ENCODE measurements at regions of chr1 and their contacts with region 1.

Region 1: GRCh38 chr1:23809751-23810171 is 9.2 kb upstream of the GALE start:
- DNase-seq: peak; percentile 88
- ATAC-seq: peak; percentile 96
- H3K4me3 Mint-ChIP-seq: no peak overlapping the region
- H3K27ac Mint-ChIP-seq: no peak overlapping the region
- H3K4me1 Mint-ChIP-seq: peaks cover 9% of the 10 kb centered on the region
- H3K27me3 Mint-ChIP-seq: no peaks in the 10 kb centered on the region
- CTCF ChIP-seq: peak; percentile 79

Region 2: DNA sequence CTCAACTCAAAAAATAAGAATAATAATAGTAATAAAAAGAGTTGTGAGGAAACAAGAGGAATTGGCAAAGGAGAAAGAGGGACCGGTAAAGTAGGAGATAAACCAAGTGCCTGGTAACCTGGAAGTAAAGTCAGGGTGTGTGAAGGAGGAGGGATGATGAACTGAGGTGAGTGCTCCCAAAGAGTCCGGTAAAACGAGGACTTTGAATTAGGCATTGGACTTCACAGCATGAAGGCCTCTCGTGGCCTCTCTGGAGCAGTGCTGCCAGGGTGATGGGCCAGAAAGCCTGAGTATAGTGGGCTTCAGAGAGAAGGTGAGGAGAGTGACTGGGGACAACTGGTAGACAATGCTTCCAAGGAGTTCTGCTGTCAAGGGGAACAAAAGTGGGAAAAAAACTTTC is 100.5 kb before region 1 on chr1:
- CTCF ChIA-PET with region 1: no interaction called
- POLR2A ChIA-PET with region 1: no interaction called
- intact Hi-C with region 1: no loop called
- DNase-seq: no peak
- ATAC-seq: no peak
- H3K4me3 Mint-ChIP-seq: no peak overlapping the region
- H3K27ac Mint-ChIP-seq: no peak overlapping the region
- H3K4me1 Mint-ChIP-seq: peaks cover 16% of the 10 kb centered on the region
- H3K27me3 Mint-ChIP-seq: no peaks in the 10 kb centered on the region
- CTCF ChIP-seq: no peak

Region 3: DNA sequence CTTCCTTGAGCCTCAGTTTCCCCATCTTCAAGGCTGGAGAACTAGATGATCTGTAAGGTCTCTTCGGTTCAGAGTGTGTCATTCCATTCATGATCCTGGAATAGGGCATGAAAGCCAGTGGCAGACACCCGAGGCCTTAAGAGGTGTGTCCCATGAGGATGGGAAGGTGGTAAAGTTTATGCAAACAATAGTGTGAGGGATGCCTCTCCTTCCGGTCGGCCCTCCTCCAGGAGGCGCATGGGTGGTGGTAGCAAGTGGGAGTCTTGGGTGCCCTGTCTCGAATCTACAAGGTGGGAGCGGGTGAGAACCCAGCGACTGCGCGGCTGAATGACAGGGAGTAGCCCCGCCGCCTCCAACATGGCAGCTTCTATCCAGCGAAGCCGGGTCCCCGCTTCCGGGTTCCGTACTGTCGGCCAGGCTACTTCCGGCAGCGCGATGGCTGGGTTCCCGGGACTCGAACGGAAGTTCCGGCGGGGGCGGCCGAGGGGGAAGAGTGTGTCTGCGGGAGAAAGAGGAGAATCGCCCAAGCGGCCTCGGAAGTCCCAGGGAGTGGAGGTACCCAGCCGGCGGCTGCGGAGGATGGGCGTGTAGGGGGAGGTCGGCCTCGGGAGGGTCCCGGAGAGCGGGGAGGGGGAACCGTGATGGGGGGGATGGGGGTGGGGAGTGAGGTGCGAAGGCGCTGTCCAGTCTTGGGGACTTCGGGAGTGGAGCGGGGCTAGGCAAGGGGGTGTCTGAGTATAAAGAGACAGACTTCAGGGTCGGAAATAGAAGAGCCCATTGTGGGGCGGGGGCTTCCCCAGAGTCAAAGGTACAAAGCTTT is 18.9 kb before region 1 on chr1 and contains the start of gene LYPLA2:
- CTCF ChIA-PET with region 1: interaction called, 14 read pairs
- POLR2A ChIA-PET with region 1: interaction called, 3 read pairs
- intact Hi-C with region 1: no loop called
- DNase-seq: peak; percentile 94
- ATAC-seq: peak; percentile 89
- H3K4me3 Mint-ChIP-seq: peak within 1 kb of the TSS; percentile 99
- H3K27ac Mint-ChIP-seq: peak within 1 kb of the TSS; percentile 96
- H3K4me1 Mint-ChIP-seq: peaks cover 20% of the 10 kb centered on the region
- H3K27me3 Mint-ChIP-seq: no peaks in the 10 kb centered on the region
- CTCF ChIP-seq: no peak
- total RNA-seq, gene LYPLA2: 57.0 to 59.2 TPM

Region 4: GRCh38 chr1:23845163-23845562 is 35.4 kb after region 1 on chr1:
- CTCF ChIA-PET with region 1: interaction called, 14 read pairs
- POLR2A ChIA-PET with region 1: no interaction called
- intact Hi-C with region 1: no loop called
- DNase-seq: no peak
- ATAC-seq: no peak
- H3K4me3 Mint-ChIP-seq: no peak overlapping the region
- H3K27ac Mint-ChIP-seq: no peak overlapping the region
- H3K4me1 Mint-ChIP-seq: no peaks in the 10 kb centered on the region
- H3K27me3 Mint-ChIP-seq: no peaks in the 10 kb centered on the region
- CTCF ChIP-seq: no peak

Region 5: DNA sequence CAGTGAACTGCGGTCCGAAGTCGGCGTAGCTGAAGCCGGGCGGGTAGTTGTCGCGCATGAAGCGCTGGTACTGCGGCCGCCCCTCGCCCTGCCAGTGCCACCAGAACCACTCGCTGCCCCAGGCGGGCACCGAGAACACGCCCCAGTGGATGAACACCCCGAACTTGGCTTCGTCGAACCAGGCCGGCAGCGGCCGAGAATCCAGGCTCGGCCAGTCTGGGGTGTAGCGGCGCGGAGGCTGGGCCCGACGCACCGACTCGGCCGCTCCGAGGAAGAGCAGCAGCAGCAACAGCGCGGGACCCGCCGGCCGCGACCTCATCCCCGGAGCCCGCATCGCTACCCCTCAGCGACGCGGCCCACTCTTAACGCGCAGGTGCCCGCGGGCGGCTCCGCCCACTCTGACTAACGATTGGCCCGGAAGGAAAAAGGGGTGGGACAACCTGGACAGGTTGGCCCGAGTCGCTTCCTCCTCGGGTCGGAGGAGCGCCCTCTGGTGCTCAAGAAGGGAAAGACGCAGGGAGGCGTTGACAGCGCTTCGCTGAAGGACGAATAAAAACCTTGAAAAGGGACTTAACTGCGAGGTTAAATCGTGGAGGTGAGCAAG is 58.3 kb after region 1 on chr1 and contains the start of gene FUCA1:
- CTCF ChIA-PET with region 1: interaction called, 33 read pairs
- POLR2A ChIA-PET with region 1: interaction called, 3 read pairs
- intact Hi-C with region 1: loop called (anchors 5 kb)
- DNase-seq: peak; percentile 96
- ATAC-seq: peak; percentile 98
- H3K4me3 Mint-ChIP-seq: peak within 1 kb of the TSS; percentile 76
- H3K27ac Mint-ChIP-seq: peak within 1 kb of the TSS; percentile 53
- H3K4me1 Mint-ChIP-seq: peaks cover 18% of the 10 kb centered on the region
- H3K27me3 Mint-ChIP-seq: no peaks in the 10 kb centered on the region
- CTCF ChIP-seq: peak; percentile 87
- total RNA-seq, gene FUCA1: 4.6 to 4.8 TPM

Region 6: DNA sequence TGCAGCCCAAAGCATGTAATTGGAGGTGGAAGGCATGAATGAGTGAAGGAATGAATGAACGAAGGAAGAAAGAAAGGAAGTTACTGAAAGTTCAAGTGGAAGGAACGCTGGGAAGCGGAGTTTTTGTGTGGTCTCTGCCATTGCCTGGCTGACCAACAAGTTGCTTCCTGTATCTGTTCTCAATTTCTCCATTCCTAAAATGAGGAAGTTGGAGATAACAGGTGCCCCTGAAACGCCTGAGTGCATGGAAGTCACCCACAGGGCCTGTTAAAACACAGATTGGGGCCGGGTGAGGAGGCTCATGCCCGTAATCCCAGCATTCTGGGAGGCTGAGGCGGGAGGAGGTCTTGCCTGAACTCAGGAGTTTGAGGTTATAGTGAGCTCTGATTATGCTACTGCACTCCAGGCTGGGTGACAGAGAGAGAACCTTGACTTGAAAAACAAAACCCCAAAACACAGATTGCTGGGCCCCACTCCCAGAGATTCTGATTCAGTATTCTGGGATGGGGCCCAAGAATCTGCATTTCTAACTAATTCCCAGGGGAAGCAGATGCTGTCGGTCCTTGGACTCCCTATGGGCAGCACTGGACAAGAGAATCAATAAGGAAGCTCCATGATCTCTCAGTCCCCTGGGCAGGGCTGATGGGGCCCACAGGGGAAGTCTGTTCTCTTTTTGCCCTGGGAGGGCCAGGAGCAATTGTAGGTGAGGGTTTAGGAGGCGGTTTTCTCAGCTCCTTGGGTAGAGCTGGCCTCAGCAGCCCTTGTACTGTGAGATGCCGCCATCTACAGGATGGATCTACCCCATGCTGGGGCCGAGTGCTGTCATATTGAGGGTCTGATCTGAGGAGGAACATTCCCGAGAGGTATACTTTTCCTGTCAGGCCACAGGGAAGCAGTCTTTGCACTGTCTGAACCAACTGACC is 106.7 kb after region 1 on chr1:
- CTCF ChIA-PET with region 1: interaction called, 73 read pairs
- POLR2A ChIA-PET with region 1: interaction called, 4 read pairs
- intact Hi-C with region 1: loop called (anchors 2 kb)
- DNase-seq: peak; percentile 83
- ATAC-seq: peak; percentile 94
- H3K4me3 Mint-ChIP-seq: no peak overlapping the region
- H3K27ac Mint-ChIP-seq: no peak overlapping the region
- H3K4me1 Mint-ChIP-seq: peaks cover 26% of the 10 kb centered on the region
- H3K27me3 Mint-ChIP-seq: no peaks in the 10 kb centered on the region
- CTCF ChIP-seq: peak; percentile 82